ENCODE measurements at regions of chr21 and their contacts with region 1.

Region 1: GRCh38 chr21:38925923-38926322 is 120.2 kb downstream of the ETS2 start:
- DNase-seq: peak; percentile 72 to 80 (median 75)
- H3K4me3 ChIP-seq: no peak overlapping the region
- H3K27ac ChIP-seq: peak overlapping the region; percentile 47 to 64
- H3K4me1 ChIP-seq: peaks cover 5% of the 10 kb centered on the region
- H3K27me3 ChIP-seq: no peaks in the 10 kb centered on the region
- CTCF ChIP-seq: no peak
- EP300 ChIP-seq: no peak
- POLR2A ChIP-seq: no peak

Region 2: GRCh38 chr21:38614192-38614957 is 311.5 kb before region 1 on chr21:
- intact Hi-C with region 1: no loop called
- DNase-seq: no peak
- H3K4me3 ChIP-seq: no peak overlapping the region
- H3K27ac ChIP-seq: no peak overlapping the region
- H3K4me1 ChIP-seq: no peaks in the 10 kb centered on the region
- H3K27me3 ChIP-seq: no peaks in the 10 kb centered on the region
- CTCF ChIP-seq: no peak
- EP300 ChIP-seq: no peak
- POLR2A ChIP-seq: no peak

Region 3: DNA sequence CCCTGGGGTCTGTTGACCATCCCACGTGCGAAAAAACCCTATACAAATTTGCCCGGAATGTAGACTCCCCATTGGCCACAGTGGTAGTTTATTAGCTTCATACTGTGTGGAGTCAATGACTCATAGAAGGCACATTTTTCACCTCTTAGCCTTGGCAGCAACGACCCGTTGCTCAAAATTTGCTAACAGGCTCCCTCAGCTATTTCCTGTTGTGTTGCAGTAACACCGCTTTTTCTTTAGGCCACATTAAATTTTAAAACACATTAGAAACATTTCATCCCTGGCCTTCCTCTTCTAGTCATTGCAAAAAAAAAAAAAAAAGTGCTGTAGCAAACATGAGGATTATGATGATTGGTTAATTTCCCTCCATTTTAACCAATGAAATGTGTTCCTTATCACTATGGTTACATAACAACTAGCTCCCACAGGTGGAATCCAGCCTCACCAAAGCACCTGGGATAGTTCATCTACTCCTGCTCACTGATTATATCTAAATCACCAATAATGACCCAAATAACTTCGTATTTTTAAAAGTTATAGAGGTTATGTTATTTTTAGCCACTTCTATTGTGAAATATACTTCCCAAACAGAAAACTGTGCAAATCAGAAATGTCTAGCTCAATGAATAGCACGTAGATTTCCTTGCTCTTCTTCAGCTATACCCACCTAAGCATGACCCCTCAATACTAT is 170.1 kb before region 1 on chr21:
- intact Hi-C with region 1: loop called in 1 of 4 experiments (anchors 10 kb)
- DNase-seq: peak; percentile 59 to 83 (median 65)
- H3K4me3 ChIP-seq: no peak overlapping the region
- H3K27ac ChIP-seq: peak overlapping the region; percentile 31 to 68
- H3K4me1 ChIP-seq: peaks cover 11% of the 10 kb centered on the region
- H3K27me3 ChIP-seq: no peaks in the 10 kb centered on the region
- CTCF ChIP-seq: no peak
- EP300 ChIP-seq: peak; percentile 3
- POLR2A ChIP-seq: no peak

Region 4: GRCh38 chr21:39114871-39115575 is 189.1 kb after region 1 on chr21:
- intact Hi-C with region 1: loop called in 1 of 4 experiments (anchors 10 kb)
- DNase-seq: no peak
- H3K4me3 ChIP-seq: no peak overlapping the region
- H3K27ac ChIP-seq: no peak overlapping the region
- H3K4me1 ChIP-seq: peaks cover 2% of the 10 kb centered on the region
- H3K27me3 ChIP-seq: no peaks in the 10 kb centered on the region
- CTCF ChIP-seq: no peak
- EP300 ChIP-seq: no peak
- POLR2A ChIP-seq: no peak

Measured in ovary (tissue), 10 donors.